HCT116 (cell line): ENCODE measurements at regions of chr3 and their contacts with region 1.

Region 1: GRCh38 chr3:30606301-30607031 is at the start of gene TGFBR2:
- DNase-seq: peak; percentile 95
- ATAC-seq: peak; percentile 90
- H3K4me3 ChIP-seq: peak within 1 kb of the TSS; percentile 76 to 84
- H3K27ac ChIP-seq: peak within 1 kb of the TSS; percentile 98
- H3K4me1 ChIP-seq: peaks cover 49 to 69% of the 10 kb centered on the region in 2 experiments
- H3K27me3 ChIP-seq: no peaks in the 10 kb centered on the region
- CTCF ChIP-seq: peak in 1 of 3 experiments; percentile 11; a peak in 2 of 6 replicates
- POLR2A ChIP-seq: no peak
- RAD21 ChIP-seq: peak; percentile 40
- total RNA-seq, gene TGFBR2: 22.5 TPM

Region 2: GRCh38 chr3:30286007-30286669 is 320.3 kb before region 1 on chr3:
- CTCF ChIA-PET with region 1: no interaction called
- POLR2A ChIA-PET with region 1: interaction called, 3 read pairs
- RAD21 ChIA-PET with region 1: no interaction called
- intact Hi-C with region 1: loop called (anchors 5 kb)
- DNase-seq: peak; percentile 68
- ATAC-seq: peak; percentile 40
- H3K4me3 ChIP-seq: peak overlapping the region in 1 of 2 experiments; percentile 16; a peak in 2 of 4 replicates
- H3K27ac ChIP-seq: peak overlapping the region; percentile 17; the same call in 1 of the 2 replicates
- H3K4me1 ChIP-seq: peaks cover 34 to 76% of the 10 kb centered on the region in 2 experiments
- H3K27me3 ChIP-seq: no peaks in the 10 kb centered on the region
- CTCF ChIP-seq: no peak
- POLR2A ChIP-seq: no peak
- RAD21 ChIP-seq: 0 out of 2 replicates have a peak, but pooled peaks have one; percentile 8

Region 3: GRCh38 chr3:30342319-30343060 is 264.0 kb before region 1 on chr3:
- CTCF ChIA-PET with region 1: no interaction called
- POLR2A ChIA-PET with region 1: no interaction called
- RAD21 ChIA-PET with region 1: no interaction called
- intact Hi-C with region 1: loop called (anchors 5 kb)
- DNase-seq: peak; percentile 89
- ATAC-seq: peak; percentile 94
- H3K4me3 ChIP-seq: peak overlapping the region; percentile 19 to 37
- H3K27ac ChIP-seq: peak overlapping the region; percentile 69; the same call in 1 of the 2 replicates
- H3K4me1 ChIP-seq: peaks cover 17 to 51% of the 10 kb centered on the region in 2 experiments
- H3K27me3 ChIP-seq: no peaks in the 10 kb centered on the region
- CTCF ChIP-seq: no peak
- POLR2A ChIP-seq: no peak
- RAD21 ChIP-seq: peak; percentile 31; the same call in 1 of the 2 replicates

Region 4: DNA sequence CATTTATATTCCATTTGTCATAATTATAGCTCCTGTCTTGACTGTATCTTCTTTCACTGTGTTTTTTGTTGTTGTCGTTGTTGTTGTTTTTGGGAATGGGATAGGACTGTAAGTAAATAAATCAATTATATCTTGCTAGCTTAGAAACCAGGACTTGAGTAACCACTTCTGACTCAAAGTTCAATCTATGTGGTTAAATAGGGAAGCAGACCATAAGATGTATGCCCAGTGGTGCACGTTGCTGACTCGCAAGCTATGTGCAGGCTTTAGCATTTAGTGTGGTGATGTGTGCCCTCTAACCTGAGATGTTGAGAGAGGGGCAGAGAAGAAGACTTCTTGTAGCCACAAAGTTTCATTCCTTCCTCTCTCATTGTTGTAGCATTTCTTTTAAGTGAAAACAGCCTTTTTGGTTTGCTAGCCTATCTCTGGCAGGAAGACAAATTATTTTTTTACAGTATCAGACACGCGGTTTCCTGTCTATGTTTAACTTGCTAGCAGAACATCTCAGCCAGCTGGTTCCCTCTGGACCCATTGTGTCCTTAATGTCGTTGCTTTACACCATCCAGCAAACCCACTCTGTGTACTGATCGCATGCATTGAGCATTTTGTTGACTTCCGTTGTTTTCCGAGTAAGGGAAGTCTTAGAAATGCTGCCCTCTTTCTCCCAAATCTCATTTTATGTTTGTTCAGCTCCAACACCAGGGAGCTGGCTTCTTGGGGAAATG is 52.0 kb after region 1 on chr3:
- CTCF ChIA-PET with region 1: no interaction called
- POLR2A ChIA-PET with region 1: no interaction called
- RAD21 ChIA-PET with region 1: no interaction called
- intact Hi-C with region 1: loop called (anchors 5 kb)
- DNase-seq: peak; percentile 13
- ATAC-seq: peak; percentile 39
- H3K4me3 ChIP-seq: peak overlapping the region in 1 of 2 experiments; percentile 52; a peak in 2 of 4 replicates
- H3K27ac ChIP-seq: peak overlapping the region; percentile 99
- H3K4me1 ChIP-seq: peaks cover 83 to 85% of the 10 kb centered on the region in 2 experiments
- H3K27me3 ChIP-seq: no peaks in the 10 kb centered on the region
- CTCF ChIP-seq: no peak
- POLR2A ChIP-seq: no peak
- RAD21 ChIP-seq: peak; percentile 16; the same call in 1 of the 2 replicates